Lower leg skin (tissue), 4 donors: ENCODE measurements at regions of chr14 and their contacts with region 1.

Region 1: GRCh38 chr14:94691660-94692034 is 78.3 kb downstream of the GSC start:
- DNase-seq: no peak
- H3K4me3 ChIP-seq: no peak overlapping the region
- CTCF ChIP-seq: no peak
- POLR2A ChIP-seq: no peak

Region 2: GRCh38 chr14:95098984-95099599 is 407.4 kb after region 1 on chr14:
- intact Hi-C with region 1: loop called (anchors 10 kb)
- DNase-seq: peak; percentile 60 to 91
- H3K4me3 ChIP-seq: no peak overlapping the region
- CTCF ChIP-seq: peak in 1 of 3 donors; percentile 42
- POLR2A ChIP-seq: no peak